Activated T-helper 1 cell treated with anti-CD3 and anti-CD28 coated beads, Interleukin-12 subunit alpha, Interleukin-12 subunit beta, Interleukin-2, Interleukin-4 antibody, amounts not matched to agents 30 ng/mL and 10 ng/mL and 1 ng/mL, durations not matched to agents 14 hours and 24 hours and 36 hours (primary cell): ENCODE measurements at regions of chr19 and their contacts with region 1.

Region 1: DNA sequence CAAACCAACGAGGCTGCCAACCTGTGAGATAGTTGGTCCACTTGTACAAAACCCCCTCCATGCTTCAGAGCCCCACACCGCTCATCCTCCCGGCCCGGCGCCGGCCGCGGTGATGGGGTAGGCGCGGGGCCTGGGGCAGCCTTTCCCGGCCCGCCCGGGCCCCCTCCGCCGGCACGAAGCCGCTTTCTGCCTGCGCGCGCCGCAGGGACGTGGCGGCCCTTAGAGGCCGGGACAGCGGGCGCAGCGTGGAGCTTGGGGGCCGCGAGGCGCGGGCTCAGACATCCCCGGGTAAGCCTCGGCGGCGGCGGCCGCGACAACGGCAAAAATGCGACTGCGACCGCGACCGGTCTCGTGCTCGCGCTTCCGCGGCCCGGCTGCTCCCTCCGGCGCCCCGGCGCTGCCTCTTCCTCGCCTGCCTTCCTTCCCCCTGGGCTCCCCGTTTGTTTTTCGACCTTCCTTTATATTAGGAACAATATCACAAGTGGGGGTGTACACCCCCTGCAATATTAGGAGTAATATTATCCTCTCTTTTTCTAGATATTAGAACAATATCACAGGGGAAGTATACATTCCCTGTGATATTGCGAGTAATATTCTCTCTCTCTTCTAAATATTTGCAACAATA is 53.9 kb upstream of the CEACAM21 start:
- DNase-seq: no peak
- H3K4me3 Mint-ChIP-seq: peak overlapping the region; percentile 81
- H3K27ac Mint-ChIP-seq: peak overlapping the region; percentile 83
- H3K4me1 Mint-ChIP-seq: peaks cover 27% of the 10 kb centered on the region
- H3K27me3 Mint-ChIP-seq: peaks cover 21% of the 10 kb centered on the region

Region 2: DNA sequence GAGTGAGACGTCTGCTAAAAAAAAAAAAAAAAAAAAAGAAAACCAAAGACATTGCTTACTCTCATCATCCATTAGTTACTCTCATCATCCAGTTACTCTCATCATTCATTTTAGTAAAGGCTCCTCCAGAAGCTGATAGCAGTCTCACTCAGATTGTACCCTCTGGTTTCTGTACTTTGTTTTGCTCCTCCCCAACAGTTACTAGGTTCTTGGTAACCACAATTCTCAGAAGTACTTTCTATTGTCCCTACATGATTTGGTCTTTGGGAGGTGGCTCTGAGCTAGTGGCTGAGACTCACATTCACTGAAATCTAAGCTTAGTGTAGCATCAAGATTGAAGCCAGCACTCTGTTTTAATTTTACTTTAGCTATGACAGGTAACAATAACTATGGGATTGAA is 64.8 kb before region 1 on chr19:
- intact Hi-C with region 1: loop called (anchors 5 kb)
- DNase-seq: no peak
- H3K4me3 Mint-ChIP-seq: peak overlapping the region; percentile 7
- H3K27ac Mint-ChIP-seq: peak overlapping the region; percentile 32
- H3K4me1 Mint-ChIP-seq: peaks cover 42% of the 10 kb centered on the region
- H3K27me3 Mint-ChIP-seq: peaks cover 9% of the 10 kb centered on the region